AG04450 (cell line): ENCODE measurements at regions of chr9 and their contacts with region 1.

Region 1: DNA sequence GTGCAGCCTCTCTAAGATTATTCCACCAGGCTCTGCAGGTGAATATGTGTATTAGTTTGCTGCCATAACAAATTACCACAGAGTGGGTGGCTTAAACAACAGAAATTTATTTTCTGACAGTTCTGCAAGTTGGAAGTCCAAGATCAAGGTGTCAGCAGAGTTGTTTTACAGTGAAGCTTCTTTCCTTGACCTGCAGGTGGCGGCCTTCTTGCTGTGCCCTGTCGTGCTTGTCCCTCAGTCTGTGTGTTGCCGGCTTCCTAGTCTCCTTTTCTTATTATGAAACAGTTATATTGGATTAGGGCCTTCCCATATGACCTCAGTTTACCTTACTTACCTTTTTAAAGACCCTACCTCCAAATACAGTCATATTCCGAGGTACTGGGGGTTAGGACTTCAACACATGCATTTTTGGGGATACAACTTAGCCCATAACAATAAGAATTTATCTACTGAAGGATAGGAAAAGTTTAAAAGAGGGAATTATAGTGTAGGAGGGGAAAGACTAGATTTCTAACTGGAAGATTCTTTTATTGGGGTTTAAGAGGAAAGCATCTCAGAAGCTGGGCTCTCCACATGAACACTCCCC is 97.4 kb downstream of the OSTF1 start:
- DNase-seq: no peak
- H3K4me3 ChIP-seq: no peak overlapping the region
- H3K27ac ChIP-seq: no peak overlapping the region
- H3K27me3 ChIP-seq: no peaks in the 10 kb centered on the region
- CTCF ChIP-seq: peak; percentile 62

Region 2: DNA sequence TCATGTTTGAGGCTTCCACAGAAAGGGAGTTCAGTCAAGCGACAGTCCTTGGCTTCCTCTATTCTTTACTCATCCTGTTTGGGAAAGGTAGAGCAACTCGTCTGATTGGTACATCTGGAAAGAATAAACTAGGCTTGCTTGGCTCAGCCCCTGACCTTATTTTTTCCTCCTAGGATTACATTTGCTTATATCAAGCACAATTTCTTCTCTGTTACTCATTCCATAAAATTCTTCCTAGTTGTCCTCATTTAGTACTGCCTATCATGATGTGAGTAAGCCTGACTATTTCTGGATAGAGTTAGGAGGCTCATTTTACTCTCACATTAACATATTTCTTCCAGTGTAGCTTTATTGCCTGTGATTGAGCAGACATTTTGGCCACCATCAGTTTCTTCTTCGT is 146.7 kb before region 1 on chr9:
- CTCF ChIA-PET with region 1: no interaction called
- POLR2A ChIA-PET with region 1: no interaction called
- DNase-seq: peak; percentile 75
- H3K4me3 ChIP-seq: no peak overlapping the region
- H3K27ac ChIP-seq: peak overlapping the region; percentile 97
- H3K27me3 ChIP-seq: no peaks in the 10 kb centered on the region
- CTCF ChIP-seq: no peak

Region 3: GRCh38 chr9:75164573-75164972 is 21.1 kb before region 1 on chr9:
- CTCF ChIA-PET with region 1: interaction called, 26 read pairs
- POLR2A ChIA-PET with region 1: no interaction called
- DNase-seq: no peak
- H3K4me3 ChIP-seq: no peak overlapping the region
- H3K27ac ChIP-seq: no peak overlapping the region
- H3K27me3 ChIP-seq: no peaks in the 10 kb centered on the region
- CTCF ChIP-seq: no peak

Region 4: GRCh38 chr9:75170898-75171360 is 14.7 kb before region 1 on chr9:
- CTCF ChIA-PET with region 1: interaction called, 26 read pairs
- POLR2A ChIA-PET with region 1: no interaction called
- DNase-seq: no peak
- H3K4me3 ChIP-seq: no peak overlapping the region
- H3K27ac ChIP-seq: no peak overlapping the region
- H3K27me3 ChIP-seq: no peaks in the 10 kb centered on the region
- CTCF ChIP-seq: no peak

Region 5: GRCh38 chr9:75200892-75201470 is 15.3 kb after region 1 on chr9:
- CTCF ChIA-PET with region 1: interaction called, 37 read pairs
- POLR2A ChIA-PET with region 1: no interaction called
- DNase-seq: no peak
- H3K4me3 ChIP-seq: no peak overlapping the region
- H3K27ac ChIP-seq: no peak overlapping the region
- H3K27me3 ChIP-seq: no peaks in the 10 kb centered on the region
- CTCF ChIP-seq: peak; percentile 65

Region 6: GRCh38 chr9:75265525-75265972 is 79.9 kb after region 1 on chr9:
- CTCF ChIA-PET with region 1: no interaction called
- POLR2A ChIA-PET with region 1: no interaction called
- DNase-seq: no peak
- H3K4me3 ChIP-seq: no peak overlapping the region
- H3K27ac ChIP-seq: no peak overlapping the region
- H3K27me3 ChIP-seq: no peaks in the 10 kb centered on the region
- CTCF ChIP-seq: peak; percentile 84